Heart right ventricle (tissue), 16 donors: ENCODE measurements at regions of chr16 and their contacts with region 1.

Region 1: GRCh38 chr16:73878611-73879010 is 418.0 kb upstream of the PSMD7 start:
- DNase-seq: peak in 1 of 2 donors; percentile 29
- ATAC-seq: peak in 4 of 8 donors; percentile 50 to 61 (median 55)
- H3K4me3 ChIP-seq: no peak overlapping the region
- H3K27ac ChIP-seq: no peak overlapping the region
- H3K4me1 ChIP-seq: no peaks in the 10 kb centered on the region
- H3K27me3 ChIP-seq: peaks cover 0 to 9% (median 0%) of the 10 kb centered on the region in 7 donors
- CTCF ChIP-seq: peak; percentile 26 to 84 (median 72)

Region 2: GRCh38 chr16:72124761-72125634 is 1753.6 kb before region 1 on chr16:
- intact Hi-C with region 1: loop called in 3 of 10 experiments (anchors 5 to 10 kb)
- DNase-seq: peak; percentile 69 to 74
- ATAC-seq: peak; percentile 55 to 92 (median 81)
- H3K4me3 ChIP-seq: no peak overlapping the region
- H3K27ac ChIP-seq: peak overlapping the region in 3 of 10 donors; percentile 10 to 67 (median 36)
- H3K4me1 ChIP-seq: peaks cover 0 to 26% (median 0%) of the 10 kb centered on the region in 9 donors
- H3K27me3 ChIP-seq: peaks cover 0 to 11% (median 0%) of the 10 kb centered on the region in 7 donors
- CTCF ChIP-seq: peak; percentile 33 to 82 (median 76)

Region 3: DNA sequence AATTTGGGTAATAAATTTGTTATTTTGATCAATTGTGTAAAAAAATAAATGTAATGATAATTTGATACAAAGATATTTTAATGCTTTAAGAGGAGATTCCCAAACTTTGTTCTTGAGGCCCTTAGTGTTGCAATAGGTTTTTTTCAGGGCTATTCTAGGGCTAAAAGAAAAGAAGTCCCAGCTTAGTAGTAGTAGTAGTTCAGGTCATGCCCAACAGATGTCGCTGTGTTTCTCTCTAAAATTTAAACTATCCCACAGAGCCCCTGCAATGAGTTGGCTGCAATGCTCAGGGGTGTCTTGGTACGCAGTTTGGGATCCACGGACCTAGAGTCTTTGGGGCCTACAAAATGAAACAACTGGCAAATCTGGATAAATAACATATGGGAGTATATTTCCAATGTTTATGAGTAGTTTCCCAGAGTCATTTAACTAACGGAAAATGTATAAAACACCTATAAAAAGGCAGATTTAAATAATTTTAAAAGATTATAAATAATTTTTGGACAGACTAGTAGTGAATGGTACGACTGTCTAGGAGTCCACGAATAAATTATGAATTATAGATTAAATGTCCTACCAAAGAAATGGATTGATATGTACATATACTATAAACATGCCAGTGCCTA is 1478.2 kb before region 1 on chr16:
- intact Hi-C with region 1: loop called in 1 of 10 experiments (anchors 10 kb)
- DNase-seq: peak in 1 of 2 donors; percentile 8
- ATAC-seq: peak in 2 of 8 donors; percentile 17 to 62
- H3K4me3 ChIP-seq: no peak overlapping the region
- H3K27ac ChIP-seq: no peak overlapping the region
- H3K4me1 ChIP-seq: no peaks in the 10 kb centered on the region
- H3K27me3 ChIP-seq: no peaks in the 10 kb centered on the region
- CTCF ChIP-seq: peak; percentile 23 to 74 (median 68)

Region 4: GRCh38 chr16:73565262-73565661 is 313.3 kb before region 1 on chr16:
- intact Hi-C with region 1: loop called in 8 of 10 experiments (anchors 2 to 10 kb)
- DNase-seq: no peak
- ATAC-seq: no peak
- H3K4me3 ChIP-seq: no peak overlapping the region
- H3K27ac ChIP-seq: no peak overlapping the region
- H3K4me1 ChIP-seq: no peaks in the 10 kb centered on the region
- H3K27me3 ChIP-seq: peaks cover 0 to 34% (median 14%) of the 10 kb centered on the region in 7 donors
- CTCF ChIP-seq: peak in 7 of 9 donors; percentile 10 to 54 (median 38)

Region 5: DNA sequence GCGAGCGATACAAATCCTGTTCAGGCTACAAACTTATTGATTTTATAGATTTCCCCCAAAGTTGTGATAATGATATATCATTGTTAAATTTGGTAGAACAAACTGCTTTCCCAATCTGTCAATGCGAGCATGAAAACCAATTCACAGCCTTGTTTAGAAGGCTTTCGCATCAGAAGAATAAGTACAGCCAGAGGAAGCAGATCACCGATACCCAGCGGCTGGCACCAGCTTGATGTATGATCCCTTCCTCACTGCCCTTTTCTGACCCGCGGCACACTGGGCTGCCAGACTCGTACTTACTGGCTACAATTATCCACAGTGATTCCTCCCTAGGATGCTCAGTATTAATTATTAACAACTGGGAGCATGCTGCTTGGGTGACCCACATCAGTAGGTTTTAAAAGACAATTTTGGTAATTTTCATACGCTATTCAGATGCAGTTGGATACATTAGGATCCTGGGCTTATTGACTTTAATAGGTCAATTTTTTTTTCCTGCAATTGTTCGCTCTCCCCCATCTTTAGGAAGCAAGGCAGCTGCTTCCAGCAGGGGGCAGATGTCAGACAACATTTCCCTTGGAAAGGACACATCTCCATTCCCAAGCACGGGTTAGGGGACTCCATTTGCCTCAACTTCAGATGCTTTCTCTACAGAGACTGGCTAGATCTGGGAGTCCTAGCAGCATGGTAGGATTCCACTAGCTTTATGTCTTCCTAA is 164.7 kb before region 1 on chr16:
- intact Hi-C with region 1: loop called in 2 of 10 experiments (anchors 2 to 10 kb)
- DNase-seq: peak; percentile 6 to 15
- ATAC-seq: no peak
- H3K4me3 ChIP-seq: no peak overlapping the region
- H3K27ac ChIP-seq: no peak overlapping the region
- H3K4me1 ChIP-seq: no peaks in the 10 kb centered on the region
- H3K27me3 ChIP-seq: peaks cover 0 to 4% (median 0%) of the 10 kb centered on the region in 7 donors
- CTCF ChIP-seq: peak in 7 of 9 donors; percentile 29 to 52 (median 39)

Region 6: DNA sequence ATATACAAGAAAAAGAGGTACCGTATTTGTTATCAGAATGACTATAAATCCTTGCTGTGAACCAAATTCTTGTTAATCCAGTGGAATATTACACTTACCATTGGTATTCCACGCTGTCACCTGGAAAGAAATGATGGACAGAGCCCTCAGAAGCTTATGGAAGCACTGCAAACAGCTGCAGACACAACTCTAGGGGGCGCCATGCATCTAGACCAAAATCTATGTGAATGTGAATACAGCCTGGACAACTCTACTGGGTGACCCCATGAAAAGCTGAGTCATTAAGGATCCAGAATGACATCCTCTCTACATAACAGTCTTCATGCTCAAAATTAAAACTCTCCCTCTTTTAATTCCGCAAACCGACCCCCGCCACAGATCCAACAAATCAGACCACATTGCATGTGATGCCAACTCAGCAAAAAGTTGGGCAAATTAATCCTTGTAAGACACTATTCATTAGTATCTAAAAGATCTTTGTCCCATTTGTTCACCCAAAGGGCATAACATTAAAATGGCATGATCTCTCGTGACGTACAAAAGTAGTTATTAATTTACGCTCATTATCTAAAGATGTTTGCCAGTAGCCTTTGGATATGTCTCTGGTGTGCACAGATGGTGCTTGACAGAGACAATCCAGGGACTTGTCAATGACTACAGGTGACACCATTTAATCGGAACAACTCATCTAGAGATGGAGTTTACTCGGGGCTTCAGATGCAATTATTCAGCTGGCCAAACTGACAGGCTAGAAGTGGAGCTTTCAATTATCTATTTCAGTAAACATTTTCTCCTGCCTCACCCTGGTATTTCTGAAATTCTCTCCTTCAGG is 134.7 kb before region 1 on chr16:
- intact Hi-C with region 1: loop called in 1 of 10 experiments (anchors 10 kb)
- DNase-seq: no peak
- ATAC-seq: no peak
- H3K4me3 ChIP-seq: no peak overlapping the region
- H3K27ac ChIP-seq: no peak overlapping the region
- H3K4me1 ChIP-seq: no peaks in the 10 kb centered on the region
- H3K27me3 ChIP-seq: no peaks in the 10 kb centered on the region
- CTCF ChIP-seq: peak in 1 of 9 donors; percentile 12

Region 7: DNA sequence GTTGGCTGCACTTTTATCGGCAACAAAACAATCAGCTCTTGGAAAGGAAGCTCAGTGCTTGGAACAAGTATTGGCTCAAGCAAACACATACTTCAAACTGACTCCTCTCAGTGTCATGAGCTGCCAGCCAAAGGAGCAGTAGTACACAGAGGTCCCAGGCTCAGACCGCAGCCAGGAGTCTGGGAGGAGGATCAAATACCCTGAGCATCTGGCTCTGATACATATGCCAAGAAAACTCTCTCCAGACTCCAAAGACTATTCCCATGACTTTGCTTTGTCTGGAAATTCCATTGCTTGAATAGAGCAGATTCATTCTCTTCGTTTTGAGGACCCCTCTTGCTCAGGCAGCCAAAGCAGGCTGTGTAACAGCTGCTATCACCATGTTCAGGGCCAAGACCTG is 83.6 kb before region 1 on chr16:
- intact Hi-C with region 1: no loop called
- DNase-seq: peak; percentile 20 to 35
- ATAC-seq: peak; percentile 41 to 92 (median 79)
- H3K4me3 ChIP-seq: no peak overlapping the region
- H3K27ac ChIP-seq: peak overlapping the region in 4 of 10 donors; percentile 10 to 75 (median 35)
- H3K4me1 ChIP-seq: peaks cover 0 to 29% (median 4%) of the 10 kb centered on the region in 9 donors
- H3K27me3 ChIP-seq: peaks cover 0 to 3% (median 0%) of the 10 kb centered on the region in 7 donors
- CTCF ChIP-seq: no peak

Region 8: DNA sequence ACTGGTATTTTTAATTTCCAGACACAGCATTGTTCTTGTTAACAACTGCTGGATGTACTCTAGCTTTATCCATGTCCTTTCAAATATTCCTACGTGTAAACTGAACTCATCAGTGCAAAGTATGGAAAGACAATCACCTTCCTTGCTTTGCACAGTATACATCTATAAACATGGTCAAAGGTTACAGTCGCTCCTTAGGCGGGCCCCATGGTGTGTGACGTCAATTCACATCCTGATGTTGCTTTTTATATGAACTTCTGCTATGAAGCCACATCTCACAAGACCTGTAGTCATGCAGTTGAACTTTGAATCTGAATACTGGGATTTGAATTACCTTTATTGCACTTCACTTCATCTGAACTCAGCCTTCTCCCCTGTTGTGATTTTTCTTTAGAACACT is 29.6 kb before region 1 on chr16:
- intact Hi-C with region 1: no loop called
- DNase-seq: no peak
- ATAC-seq: no peak
- H3K4me3 ChIP-seq: no peak overlapping the region
- H3K27ac ChIP-seq: no peak overlapping the region
- H3K4me1 ChIP-seq: peaks cover 0 to 8% (median 0%) of the 10 kb centered on the region in 9 donors
- H3K27me3 ChIP-seq: no peaks in the 10 kb centered on the region
- CTCF ChIP-seq: no peak

Region 9: DNA sequence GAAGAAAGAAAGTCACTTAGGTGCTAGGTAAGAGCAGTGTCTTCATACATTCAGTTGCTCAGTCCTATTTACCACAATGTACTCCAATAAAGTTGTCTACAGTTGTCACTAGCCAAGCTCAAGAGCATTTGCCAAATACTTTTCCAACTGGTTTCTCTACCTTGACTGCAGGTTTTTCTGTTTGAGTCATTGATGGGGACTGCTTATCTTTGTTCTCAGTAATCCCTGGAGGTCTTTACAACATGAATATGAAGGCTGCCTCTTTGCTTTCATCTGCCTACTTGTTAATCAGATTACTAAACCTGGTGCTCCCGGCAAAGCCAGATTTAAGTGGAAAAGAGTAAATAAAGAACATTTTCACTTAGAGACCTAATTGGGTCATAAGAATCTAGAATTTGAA is 607.3 kb after region 1 on chr16:
- intact Hi-C with region 1: no loop called
- DNase-seq: no peak
- ATAC-seq: no peak
- H3K4me3 ChIP-seq: no peak overlapping the region
- H3K27ac ChIP-seq: no peak overlapping the region
- H3K4me1 ChIP-seq: no peaks in the 10 kb centered on the region
- H3K27me3 ChIP-seq: no peaks in the 10 kb centered on the region
- CTCF ChIP-seq: no peak